Colonic mucosa (tissue), 4 donors: ENCODE measurements at regions of chr19 and their contacts with region 1.

Region 1: DNA sequence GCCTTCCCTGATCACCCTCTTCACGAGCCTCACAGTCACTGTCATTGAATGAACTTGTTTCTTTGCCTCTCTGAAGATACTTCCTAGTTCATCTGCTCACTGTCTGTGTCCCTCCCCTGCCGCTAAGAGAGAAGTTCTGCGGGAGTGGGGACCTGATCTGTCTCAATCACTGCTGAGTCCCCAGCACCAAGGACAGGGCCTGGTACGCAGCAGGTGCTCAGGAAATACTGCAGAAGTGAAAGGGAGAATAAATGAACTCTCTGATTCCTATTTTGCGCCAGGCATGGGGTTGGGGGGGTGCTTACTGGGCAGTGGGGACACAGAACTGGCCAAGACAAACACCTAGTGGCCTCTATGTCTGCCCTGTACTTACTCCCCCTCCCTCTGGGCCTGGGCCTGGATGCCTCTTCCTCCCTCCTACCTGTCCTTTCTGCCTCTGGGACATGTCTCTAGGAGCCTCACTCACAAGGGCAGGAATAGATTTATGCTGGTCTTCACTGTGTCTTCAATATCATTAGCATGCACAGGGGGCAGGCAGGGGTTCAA is 17.5 kb downstream of the FCGBP start:
- DNase-seq: peak; percentile 20
- H3K4me3 ChIP-seq: no peak overlapping the region
- H3K27ac ChIP-seq: no peak overlapping the region
- H3K4me1 ChIP-seq: no peaks in the 10 kb centered on the region
- H3K27me3 ChIP-seq: no peaks in the 10 kb centered on the region
- CTCF ChIP-seq: no peak

Region 2: DNA sequence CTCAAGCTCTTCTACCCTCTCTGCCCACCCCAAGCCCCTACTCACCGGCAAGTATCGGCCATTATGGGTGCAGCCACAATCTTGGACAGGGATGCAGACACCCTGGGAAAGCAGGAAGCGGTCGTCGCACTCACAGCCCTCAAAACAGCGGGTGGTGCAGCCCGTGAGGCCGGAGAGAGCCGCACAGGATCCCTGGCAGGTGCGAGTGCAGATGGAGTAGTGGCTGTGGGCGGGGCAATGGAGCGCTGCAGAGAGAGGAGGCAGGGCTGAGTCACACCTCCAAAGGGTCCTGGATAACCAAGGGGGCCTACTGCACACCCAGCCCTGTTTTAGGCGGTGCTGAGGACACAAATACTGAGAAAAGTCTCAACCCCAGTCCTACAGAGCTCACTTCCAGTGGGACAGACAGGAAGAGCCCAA is 46.7 kb before region 1 on chr19:
- intact Hi-C with region 1: no loop called
- DNase-seq: no peak
- H3K4me3 ChIP-seq: no peak overlapping the region
- H3K27ac ChIP-seq: no peak overlapping the region
- H3K4me1 ChIP-seq: no peaks in the 10 kb centered on the region
- H3K27me3 ChIP-seq: no peaks in the 10 kb centered on the region
- CTCF ChIP-seq: no peak

Region 3: GRCh38 chr19:39963898-39964297 is 47.0 kb after region 1 on chr19:
- intact Hi-C with region 1: loop called (anchors 5 kb)
- DNase-seq: no peak
- H3K4me3 ChIP-seq: no peak overlapping the region
- H3K27ac ChIP-seq: no peak overlapping the region
- H3K4me1 ChIP-seq: no peaks in the 10 kb centered on the region
- H3K27me3 ChIP-seq: no peaks in the 10 kb centered on the region
- CTCF ChIP-seq: no peak